Activated naive CD4-positive, alpha-beta T cell treated with anti-CD3 and anti-CD28 coated beads for 36 hours (primary cell): ENCODE measurements at regions of chr3 and their contacts with region 1.

Region 1: GRCh38 chr3:183178629-183179549 is 16.4 kb upstream of the LAMP3 start:
- DNase-seq: peak; percentile 84
- H3K4me3 Mint-ChIP-seq: peak overlapping the region; percentile 76
- H3K27ac Mint-ChIP-seq: no peak overlapping the region
- H3K4me1 Mint-ChIP-seq: peaks cover 11% of the 10 kb centered on the region
- H3K27me3 Mint-ChIP-seq: peaks cover 30% of the 10 kb centered on the region

Region 2: GRCh38 chr3:183220828-183221227 is 41.9 kb after region 1 on chr3:
- CTCF ChIA-PET with region 1: no interaction called
- intact Hi-C with region 1: no loop called
- DNase-seq: no peak
- H3K4me3 Mint-ChIP-seq: no peak overlapping the region
- H3K27ac Mint-ChIP-seq: no peak overlapping the region
- H3K4me1 Mint-ChIP-seq: peaks cover 20% of the 10 kb centered on the region
- H3K27me3 Mint-ChIP-seq: no peaks in the 10 kb centered on the region

Region 3: DNA sequence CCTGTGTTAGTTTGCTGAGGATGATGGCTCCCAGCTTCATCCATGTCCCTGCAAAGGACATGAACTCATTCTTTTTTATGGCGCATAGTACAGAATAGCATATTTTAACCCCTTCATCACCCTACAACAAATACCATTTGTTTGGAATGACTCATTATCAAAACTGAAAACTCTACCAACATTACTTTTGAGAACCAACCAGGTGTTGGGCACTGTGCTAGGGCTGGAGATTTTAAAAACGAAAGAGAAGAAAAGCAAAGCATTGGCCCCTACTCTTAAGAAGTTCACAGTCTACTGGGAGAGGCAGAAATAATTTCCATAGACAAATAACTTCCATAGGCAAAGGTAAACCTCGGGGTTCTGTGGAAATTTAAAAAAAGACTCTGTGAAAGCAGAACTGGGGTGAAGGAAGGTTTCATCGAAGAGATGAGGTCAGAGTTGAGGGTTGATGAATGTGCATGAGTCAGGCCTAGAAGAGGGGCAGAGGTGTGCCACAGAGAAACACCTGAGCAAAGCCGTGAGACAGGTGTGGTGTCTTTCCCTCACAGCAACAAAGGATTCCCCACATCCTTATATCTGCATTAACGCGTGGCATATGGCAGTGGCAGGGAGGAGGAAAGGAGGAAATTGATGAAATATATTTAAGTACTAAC is 198.5 kb after region 1 on chr3:
- CTCF ChIA-PET with region 1: interaction called, 318 read pairs
- intact Hi-C with region 1: loop called (anchors 1 kb)
- DNase-seq: no peak
- H3K4me3 Mint-ChIP-seq: no peak overlapping the region
- H3K27ac Mint-ChIP-seq: no peak overlapping the region
- H3K4me1 Mint-ChIP-seq: peaks cover 21% of the 10 kb centered on the region
- H3K27me3 Mint-ChIP-seq: no peaks in the 10 kb centered on the region

Region 4: DNA sequence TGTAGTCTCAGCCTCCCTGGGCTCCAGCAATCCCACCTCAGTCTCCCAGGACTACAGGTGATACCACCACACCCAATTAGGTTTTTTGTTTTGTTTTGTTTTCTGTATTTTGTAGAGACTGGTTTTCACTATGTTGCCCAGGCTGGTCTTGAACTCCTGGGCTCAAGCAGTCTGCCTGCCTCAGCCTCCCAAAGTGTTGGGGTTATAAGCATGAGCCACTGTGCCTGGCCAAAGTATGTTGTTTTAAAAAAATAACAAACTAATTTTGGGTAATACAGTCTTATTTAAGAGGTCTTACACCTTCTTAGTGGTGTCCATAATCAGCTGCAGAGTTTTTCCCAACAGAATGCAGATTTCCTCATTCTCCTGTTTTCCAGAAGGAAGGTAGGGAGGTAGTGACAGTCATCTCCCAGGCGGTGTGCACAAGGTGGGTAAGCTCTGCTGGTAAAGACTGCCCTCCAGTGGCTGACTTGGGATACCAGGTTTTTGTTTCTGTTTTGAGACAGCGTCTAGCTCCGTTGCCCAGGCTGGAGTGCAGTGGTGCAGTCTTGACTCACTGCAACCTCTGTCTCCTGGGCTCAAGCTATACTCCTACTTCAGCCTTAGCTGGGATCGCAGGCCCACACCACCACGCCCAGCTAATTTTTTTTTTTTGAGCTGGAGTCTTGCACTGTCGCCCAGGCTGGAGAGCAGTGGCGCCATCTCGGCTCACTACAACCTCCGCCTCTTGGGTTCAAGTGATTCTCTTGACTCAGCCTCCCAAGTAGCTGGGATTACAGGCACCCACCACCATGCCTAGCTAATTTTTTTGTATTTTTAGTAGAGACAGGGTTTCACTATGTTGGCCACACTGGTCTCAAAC is 588.1 kb after region 1 on chr3:
- CTCF ChIA-PET with region 1: no interaction called
- intact Hi-C with region 1: loop called (anchors 1 kb)
- DNase-seq: peak; percentile 89
- H3K4me3 Mint-ChIP-seq: no peak overlapping the region
- H3K27ac Mint-ChIP-seq: no peak overlapping the region
- H3K4me1 Mint-ChIP-seq: peaks cover 11% of the 10 kb centered on the region
- H3K27me3 Mint-ChIP-seq: no peaks in the 10 kb centered on the region